ENCODE measurements at regions of chr11 and their contacts with region 1.

Region 1: DNA sequence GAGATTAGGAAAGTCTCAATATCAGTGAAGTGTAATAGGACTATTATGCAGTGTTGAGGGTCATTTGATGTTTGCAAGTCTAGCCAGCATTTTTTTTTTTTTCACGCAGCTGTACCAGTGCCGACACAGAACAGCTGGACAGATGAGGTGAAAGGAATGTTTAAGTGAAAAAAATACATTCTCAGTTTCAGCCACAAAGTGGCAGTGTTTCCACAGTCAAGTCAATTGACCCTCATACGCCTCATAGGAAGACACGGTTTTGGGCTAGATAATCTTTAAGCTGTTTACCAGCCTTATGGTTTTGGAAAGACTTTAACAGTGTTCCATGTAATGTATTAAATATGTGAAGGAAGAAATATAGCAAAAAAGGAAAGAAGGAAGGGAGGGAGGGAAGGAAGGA is 349.9 kb upstream of the ANO3 start:
- H3K4me3 ChIP-seq: no peak overlapping the region
- H3K27ac ChIP-seq: no peak overlapping the region
- H3K4me1 ChIP-seq: no peaks in the 10 kb centered on the region
- CTCF ChIP-seq: no peak

Region 2: GRCh38 chr11:25794804-25795203 is 187.2 kb before region 1 on chr11:
- CTCF ChIA-PET with region 1: no interaction called
- POLR2A ChIA-PET with region 1: no interaction called
- H3K4me3 ChIP-seq: no peak overlapping the region
- H3K27ac ChIP-seq: no peak overlapping the region
- H3K4me1 ChIP-seq: no peaks in the 10 kb centered on the region
- CTCF ChIP-seq: no peak

Region 3: GRCh38 chr11:25970726-25971508 is 11.1 kb before region 1 on chr11:
- CTCF ChIA-PET with region 1: interaction called, 15 read pairs
- POLR2A ChIA-PET with region 1: no interaction called
- H3K4me3 ChIP-seq: no peak overlapping the region
- H3K27ac ChIP-seq: no peak overlapping the region
- H3K4me1 ChIP-seq: no peaks in the 10 kb centered on the region
- CTCF ChIP-seq: no peak

Region 4: GRCh38 chr11:26276798-26277424 is 294.9 kb after region 1 on chr11:
- CTCF ChIA-PET with region 1: interaction called, 14 read pairs
- POLR2A ChIA-PET with region 1: no interaction called
- H3K4me3 ChIP-seq: no peak overlapping the region
- H3K27ac ChIP-seq: no peak overlapping the region
- H3K4me1 ChIP-seq: no peaks in the 10 kb centered on the region
- CTCF ChIP-seq: 0 out of 2 replicates have a peak, but pooled peaks have one; percentile 28

Measured in HEK293 (cell line).